ENCODE measurements at regions of chr18 and their contacts with region 1.

Region 1: DNA sequence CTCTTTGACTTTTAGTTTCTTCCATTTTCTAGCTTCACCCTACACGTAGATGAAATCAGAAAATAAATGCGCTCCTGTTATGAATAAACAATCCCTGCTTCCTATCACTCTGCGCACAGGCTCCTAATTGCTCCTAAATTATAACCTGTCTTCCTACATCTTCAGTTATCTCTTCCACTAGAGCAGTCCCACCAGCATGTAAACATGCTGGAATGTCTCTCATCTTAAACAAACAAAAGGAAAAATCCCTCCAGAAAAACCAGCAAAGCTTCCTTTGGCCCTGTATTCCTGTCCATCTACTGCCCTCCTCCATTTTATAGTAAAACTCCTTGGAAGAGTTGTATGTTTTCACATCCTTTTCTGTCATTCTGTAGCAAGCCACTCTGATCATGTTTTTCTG is 86.1 kb downstream of the SMCHD1 start:
- DNase-seq: no peak
- ATAC-seq: no peak
- H3K4me3 ChIP-seq: no peak overlapping the region
- H3K27ac ChIP-seq: no peak overlapping the region
- H3K4me1 ChIP-seq: no peaks in the 10 kb centered on the region
- H3K27me3 ChIP-seq: no peaks in the 10 kb centered on the region
- CTCF ChIP-seq: no peak
- EP300 ChIP-seq: no peak
- POLR2A ChIP-seq: no peak
- RAD21 ChIP-seq: no peak

Region 2: GRCh38 chr18:2555895-2556294 is 185.8 kb before region 1 on chr18:
- CTCF ChIA-PET with region 1: no interaction called
- POLR2A ChIA-PET with region 1: no interaction called
- in situ Hi-C with region 1: no loop called
- intact Hi-C with region 1: no loop called
- DNase-seq: no peak
- ATAC-seq: no peak
- H3K4me3 ChIP-seq: no peak overlapping the region
- H3K27ac ChIP-seq: no peak overlapping the region
- H3K4me1 ChIP-seq: no peaks in the 10 kb centered on the region
- H3K27me3 ChIP-seq: no peaks in the 10 kb centered on the region
- CTCF ChIP-seq: no peak
- EP300 ChIP-seq: no peak
- POLR2A ChIP-seq: no peak
- RAD21 ChIP-seq: no peak

Region 3: GRCh38 chr18:2797951-2798350 is 56.3 kb after region 1 on chr18:
- CTCF ChIA-PET with region 1: no interaction called
- POLR2A ChIA-PET with region 1: no interaction called
- in situ Hi-C with region 1: no loop called
- intact Hi-C with region 1: loop called (anchors 10 kb)
- DNase-seq: no peak
- ATAC-seq: no peak
- H3K4me3 ChIP-seq: no peak overlapping the region
- H3K27ac ChIP-seq: no peak overlapping the region
- H3K4me1 ChIP-seq: no peaks in the 10 kb centered on the region
- H3K27me3 ChIP-seq: no peaks in the 10 kb centered on the region
- CTCF ChIP-seq: no peak
- EP300 ChIP-seq: no peak
- POLR2A ChIP-seq: no peak
- RAD21 ChIP-seq: no peak

Measured in HepG2 (cell line).